MCF 10A (cell line): ENCODE measurements at regions of chr2 and their contacts with region 1.

Region 1: DNA sequence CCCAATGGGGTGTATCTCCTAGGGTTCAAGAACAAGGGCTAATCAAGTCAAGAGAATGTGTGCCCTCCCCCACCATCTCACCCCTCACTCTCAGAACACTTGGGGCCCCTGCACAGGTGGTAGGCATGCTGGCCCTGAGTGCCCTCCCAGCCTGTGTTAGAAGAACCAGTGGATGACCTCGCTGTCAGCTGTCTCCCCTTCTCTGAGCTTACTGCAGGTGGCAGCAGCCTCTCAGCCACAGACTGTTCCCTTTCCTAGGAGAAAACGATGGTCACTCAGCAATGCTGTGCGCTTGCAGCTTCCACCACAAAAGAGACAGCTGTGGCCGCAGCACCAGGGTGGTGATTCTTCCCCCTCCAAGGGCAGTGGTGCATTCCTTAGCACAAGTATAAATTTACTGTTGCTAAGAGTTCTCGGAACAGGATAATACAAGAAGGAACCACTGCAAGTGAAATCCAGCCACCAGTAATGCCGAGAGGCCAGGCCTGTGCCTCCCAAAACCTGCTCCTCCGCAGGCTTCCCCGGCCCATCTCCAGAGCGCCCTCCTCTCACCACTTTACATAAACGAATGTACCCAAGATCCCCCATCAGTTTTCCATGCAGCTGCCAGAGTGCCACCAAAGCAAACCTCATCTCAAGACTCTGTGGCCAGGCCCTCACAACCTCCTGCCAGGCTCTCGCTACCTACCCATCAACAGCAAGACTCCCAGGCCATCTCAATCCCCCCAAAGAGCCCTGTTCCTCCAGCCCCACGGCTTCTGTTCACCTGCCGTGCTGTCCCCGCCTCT is 935 bp upstream of the RAMP1 start:
- DNase-seq: peak; percentile 84
- H3K4me3 Mint-ChIP-seq: peak overlapping the region; percentile 43
- H3K27ac Mint-ChIP-seq: no peak overlapping the region
- H3K4me1 Mint-ChIP-seq: peaks cover 8% of the 10 kb centered on the region
- H3K27me3 Mint-ChIP-seq: no peaks in the 10 kb centered on the region
- CTCF ChIP-seq: peak; percentile 81

Region 2: GRCh38 chr2:238030422-238031154 is 172.1 kb after region 1 on chr2:
- CTCF ChIA-PET with region 1: interaction called, 3 read pairs
- POLR2A ChIA-PET with region 1: no interaction called
- intact Hi-C with region 1: loop called (anchors 1 kb)
- DNase-seq: no peak
- H3K4me3 Mint-ChIP-seq: no peak overlapping the region
- H3K27ac Mint-ChIP-seq: peak overlapping the region; percentile 74
- H3K4me1 Mint-ChIP-seq: peaks cover 9% of the 10 kb centered on the region
- H3K27me3 Mint-ChIP-seq: no peaks in the 10 kb centered on the region
- CTCF ChIP-seq: no peak

Region 3: DNA sequence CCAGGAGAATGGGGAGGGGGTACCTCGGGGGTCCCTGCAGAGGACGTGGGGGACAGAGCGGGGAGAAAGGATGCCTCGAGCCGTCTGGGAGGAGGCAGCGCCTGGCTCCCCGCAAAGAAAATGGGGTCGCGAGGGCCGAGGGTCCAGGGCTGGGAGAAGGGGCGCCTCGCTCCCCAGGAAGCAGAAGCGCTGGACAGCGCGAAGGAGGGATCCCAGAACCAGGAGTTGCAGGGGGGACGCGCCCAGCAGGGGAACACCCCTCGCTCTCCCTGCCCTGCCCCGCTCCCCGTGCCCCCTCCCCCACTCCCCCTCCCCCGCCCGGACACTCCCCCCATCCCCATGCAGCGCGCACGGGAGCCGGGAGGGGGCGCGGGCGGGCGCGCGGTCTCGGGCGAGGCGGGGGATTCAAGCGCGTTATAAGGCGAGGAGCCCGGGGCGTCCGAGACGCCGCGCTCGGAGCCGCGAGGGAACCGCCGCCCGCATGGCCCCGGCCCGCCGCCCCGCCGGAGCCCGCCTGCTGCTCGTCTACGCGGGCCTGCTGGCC is 300.1 kb after region 1 on chr2 and contains the start of gene ERFE:
- CTCF ChIA-PET with region 1: no interaction called
- POLR2A ChIA-PET with region 1: no interaction called
- intact Hi-C with region 1: loop called (anchors 2 kb)
- DNase-seq: peak; percentile 58
- H3K4me3 Mint-ChIP-seq: peak within 1 kb of the TSS; percentile 62
- H3K27ac Mint-ChIP-seq: no peak within 1 kb of the TSS
- H3K4me1 Mint-ChIP-seq: peaks cover 5% of the 10 kb centered on the region
- H3K27me3 Mint-ChIP-seq: no peaks in the 10 kb centered on the region
- CTCF ChIP-seq: peak; percentile 67
- total RNA-seq, gene ERFE: 14.5 and 18.1 TPM in 2 replicates